Activated B cell treated with CpG ODN at 0.5 μM for 24 hours (primary cell): ENCODE measurements at regions of chr11 and their contacts with region 1.

Region 1: DNA sequence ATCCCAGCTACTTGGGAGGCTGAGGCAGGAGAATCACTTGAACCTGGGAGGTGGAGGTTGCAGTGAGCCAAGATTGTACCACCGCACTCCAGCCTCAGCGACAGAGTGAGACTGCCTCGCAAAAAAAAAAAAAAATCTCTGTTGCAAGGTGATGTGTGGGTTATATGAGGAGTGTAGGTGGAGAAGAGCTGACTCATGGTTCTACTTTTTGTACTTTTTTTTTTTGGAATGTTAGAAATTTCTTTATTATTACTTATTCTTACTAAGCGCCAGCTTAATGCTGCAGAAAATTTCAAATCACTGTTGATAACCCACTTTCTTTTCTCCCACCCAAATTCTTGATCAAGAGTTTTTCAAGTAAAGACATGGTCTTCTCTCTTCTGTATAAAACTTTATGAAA is 29.6 kb upstream of the DNAJB13 start:
- DNase-seq: no peak
- ATAC-seq: no peak
- H3K4me3 Mint-ChIP-seq: no peak overlapping the region
- H3K27ac Mint-ChIP-seq: no peak overlapping the region
- H3K4me1 Mint-ChIP-seq: no peaks in the 10 kb centered on the region
- H3K27me3 Mint-ChIP-seq: no peaks in the 10 kb centered on the region
- CTCF ChIP-seq: no peak

Region 2: DNA sequence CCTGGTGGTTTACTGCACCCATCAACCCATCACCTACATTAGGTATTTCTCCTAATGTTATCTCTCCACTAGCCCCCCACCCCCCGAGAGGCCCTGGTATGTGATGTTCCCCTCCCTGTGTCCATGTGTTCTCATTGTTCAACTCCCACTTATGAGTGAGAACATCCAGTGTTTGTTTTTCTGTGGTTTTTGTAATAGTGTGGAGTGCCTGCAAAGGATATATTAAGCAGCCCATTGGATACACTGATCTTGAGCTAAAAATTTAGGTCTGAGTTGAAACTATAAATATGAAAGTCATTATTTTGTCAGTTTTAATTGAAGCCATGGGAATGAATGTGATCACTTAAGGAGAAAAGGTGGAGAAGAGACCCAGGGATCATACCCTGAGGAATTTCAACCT is 110.5 kb before region 1 on chr11:
- CTCF ChIA-PET with region 1: no interaction called
- POLR2A ChIA-PET with region 1: no interaction called
- intact Hi-C with region 1: no loop called
- DNase-seq: no peak
- ATAC-seq: no peak
- H3K4me3 Mint-ChIP-seq: no peak overlapping the region
- H3K27ac Mint-ChIP-seq: no peak overlapping the region
- H3K4me1 Mint-ChIP-seq: no peaks in the 10 kb centered on the region
- H3K27me3 Mint-ChIP-seq: no peaks in the 10 kb centered on the region
- CTCF ChIP-seq: no peak

Region 3: DNA sequence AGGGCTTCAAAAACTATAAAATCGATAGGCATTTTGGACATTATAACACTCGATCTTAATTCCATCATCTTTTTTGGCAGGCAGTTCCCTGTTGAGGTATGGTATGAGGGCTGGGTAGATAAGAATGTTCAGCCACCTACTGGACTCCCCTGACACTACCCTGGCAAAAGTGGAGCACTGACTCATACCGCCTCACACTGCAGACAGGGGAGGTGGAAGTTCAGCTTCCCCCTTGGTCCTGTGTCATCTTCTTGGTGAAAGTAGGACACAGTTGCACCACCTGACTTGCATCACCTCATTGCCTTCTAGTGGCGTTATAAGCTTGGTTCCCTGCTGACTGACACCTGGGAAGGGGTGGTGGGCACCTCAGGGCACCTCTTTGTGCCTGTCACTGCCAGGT is 14.0 kb before region 1 on chr11:
- CTCF ChIA-PET with region 1: no interaction called
- POLR2A ChIA-PET with region 1: no interaction called
- intact Hi-C with region 1: loop called (anchors 1 kb)
- DNase-seq: no peak
- ATAC-seq: no peak
- H3K4me3 Mint-ChIP-seq: no peak overlapping the region
- H3K27ac Mint-ChIP-seq: no peak overlapping the region
- H3K4me1 Mint-ChIP-seq: no peaks in the 10 kb centered on the region
- H3K27me3 Mint-ChIP-seq: no peaks in the 10 kb centered on the region
- CTCF ChIP-seq: no peak